Lower lobe of right lung (tissue), 2 donors: ENCODE measurements at regions of chr12 and their contacts with region 1.

Region 1: DNA sequence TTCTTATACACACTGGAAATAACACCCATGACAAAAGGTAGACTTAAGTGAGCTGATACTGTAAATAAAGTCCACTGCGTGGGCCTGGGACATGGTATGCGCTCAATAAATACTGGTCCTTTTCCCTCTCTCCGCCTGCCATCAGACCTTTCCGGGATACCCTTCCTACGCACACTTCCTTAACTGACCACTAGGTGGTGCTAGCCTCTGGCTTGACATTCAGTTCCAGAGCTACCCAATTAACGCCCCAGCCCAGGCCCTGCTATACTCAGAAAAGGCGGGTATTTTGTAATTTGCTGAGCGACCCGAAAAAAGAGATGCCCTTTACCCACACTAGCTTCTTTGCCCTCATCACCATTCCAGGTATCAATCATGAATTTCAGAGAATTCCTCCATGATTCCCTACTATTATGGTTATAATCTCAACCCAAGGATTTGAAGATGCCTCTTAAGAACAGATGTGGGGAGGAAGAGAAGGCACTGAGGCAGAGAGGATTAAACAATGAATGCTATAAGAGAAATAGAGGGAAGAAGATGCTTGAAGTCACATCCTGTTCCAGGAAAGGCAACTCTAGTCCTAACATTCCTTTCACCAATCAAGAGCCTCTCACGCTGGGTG is 3.9 kb upstream of the LRP1 start:
- DNase-seq: no peak
- ATAC-seq: peak; percentile 42 to 67
- H3K4me3 ChIP-seq: no peak overlapping the region
- H3K27ac ChIP-seq: no peak overlapping the region
- H3K4me1 ChIP-seq: peaks cover 16% of the 10 kb centered on the region
- H3K27me3 ChIP-seq: no peaks in the 10 kb centered on the region
- CTCF ChIP-seq: peak; percentile 98

Region 2: DNA sequence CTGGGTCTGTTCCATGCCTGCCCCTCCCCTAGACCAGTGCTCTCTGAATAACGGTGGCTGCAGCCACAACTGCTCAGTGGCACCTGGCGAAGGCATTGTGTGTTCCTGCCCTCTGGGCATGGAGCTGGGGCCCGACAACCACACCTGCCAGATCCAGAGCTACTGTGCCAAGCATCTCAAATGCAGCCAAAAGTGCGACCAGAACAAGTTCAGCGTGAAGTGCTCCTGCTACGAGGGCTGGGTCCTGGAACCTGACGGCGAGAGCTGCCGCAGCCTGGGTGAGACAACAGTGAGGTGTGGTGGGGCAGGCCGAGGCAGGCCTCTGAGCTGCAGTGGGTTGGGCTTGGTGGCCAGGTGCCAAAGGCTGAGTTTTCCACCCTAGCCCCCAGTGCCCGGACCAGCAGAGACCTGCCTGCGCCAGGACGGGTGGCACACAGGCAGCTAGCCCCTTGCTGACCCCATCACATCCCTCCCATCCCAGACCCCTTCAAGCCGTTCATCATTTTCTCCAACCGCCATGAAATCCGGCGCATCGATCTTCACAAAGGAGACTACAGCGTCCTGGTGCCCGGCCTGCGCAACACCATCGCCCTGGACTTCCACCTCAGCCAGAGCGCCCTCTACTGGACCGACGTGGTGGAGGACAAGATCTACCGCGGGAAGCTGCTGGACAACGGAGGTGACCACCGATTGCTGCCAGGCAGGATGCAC is 51.2 kb after region 1 on chr12:
- intact Hi-C with region 1: loop called (anchors 10 kb)
- DNase-seq: peak; percentile 82
- ATAC-seq: peak; percentile 59 to 63
- H3K4me3 ChIP-seq: no peak overlapping the region
- H3K27ac ChIP-seq: peak overlapping the region; percentile 18
- H3K4me1 ChIP-seq: no peaks in the 10 kb centered on the region
- H3K27me3 ChIP-seq: no peaks in the 10 kb centered on the region
- CTCF ChIP-seq: peak; percentile 69

Region 3: DNA sequence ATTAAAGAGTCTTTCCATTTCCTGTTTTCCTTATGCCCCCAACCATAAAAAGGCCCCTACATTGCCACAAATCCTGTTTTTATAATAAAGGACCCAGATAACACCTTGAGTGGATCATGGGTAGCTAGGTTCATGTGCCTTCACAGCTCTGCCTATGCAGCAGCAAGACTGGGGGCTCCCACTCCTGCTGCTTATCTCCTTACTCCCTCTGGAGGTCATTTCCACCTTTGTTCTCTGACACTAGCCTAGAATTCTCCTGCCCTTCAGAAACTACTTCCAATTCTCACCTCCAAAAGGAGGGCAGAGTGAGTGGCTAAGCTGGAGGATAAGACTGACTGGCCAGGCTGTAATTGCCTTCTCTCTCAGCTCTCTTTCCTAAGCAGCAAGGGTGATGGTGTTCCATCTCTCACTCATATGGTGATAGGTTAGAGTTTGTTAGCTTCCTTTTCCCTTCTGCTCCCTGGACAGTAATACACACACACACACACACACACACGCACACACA is 146.7 kb after region 1 on chr12:
- intact Hi-C with region 1: no loop called
- DNase-seq: no peak
- ATAC-seq: no peak
- H3K4me3 ChIP-seq: no peak overlapping the region
- H3K27ac ChIP-seq: no peak overlapping the region
- H3K4me1 ChIP-seq: no peaks in the 10 kb centered on the region
- H3K27me3 ChIP-seq: no peaks in the 10 kb centered on the region
- CTCF ChIP-seq: no peak